ENCODE measurements at regions of chr11 and their contacts with region 1.

Region 1: GRCh38 chr11:118202599-118203422 is 22.0 kb downstream of the JAML start:
- DNase-seq: no peak
- H3K4me3 ChIP-seq: no peak overlapping the region
- H3K27ac ChIP-seq: no peak overlapping the region
- H3K4me1 ChIP-seq: no peaks in the 10 kb centered on the region
- H3K27me3 ChIP-seq: no peaks in the 10 kb centered on the region
- CTCF ChIP-seq: no peak
- POLR2A ChIP-seq: no peak

Region 2: GRCh38 chr11:118342503-118343161 is 139.8 kb after region 1 on chr11 and contains the start of gene CD3D:
- intact Hi-C with region 1: loop called (anchors 10 kb)
- DNase-seq: no peak
- H3K4me3 ChIP-seq: no peak within 1 kb of the TSS
- H3K27ac ChIP-seq: no peak within 1 kb of the TSS
- H3K4me1 ChIP-seq: no peaks in the 10 kb centered on the region
- H3K27me3 ChIP-seq: no peaks in the 10 kb centered on the region
- CTCF ChIP-seq: no peak
- POLR2A ChIP-seq: no peak
- total RNA-seq, gene CD3D: 1.8 TPM in 1 of 2 donors, not detected in the other